IMR-90 (cell line): ENCODE measurements at regions of chr10 and their contacts with region 1.

Region 1: DNA sequence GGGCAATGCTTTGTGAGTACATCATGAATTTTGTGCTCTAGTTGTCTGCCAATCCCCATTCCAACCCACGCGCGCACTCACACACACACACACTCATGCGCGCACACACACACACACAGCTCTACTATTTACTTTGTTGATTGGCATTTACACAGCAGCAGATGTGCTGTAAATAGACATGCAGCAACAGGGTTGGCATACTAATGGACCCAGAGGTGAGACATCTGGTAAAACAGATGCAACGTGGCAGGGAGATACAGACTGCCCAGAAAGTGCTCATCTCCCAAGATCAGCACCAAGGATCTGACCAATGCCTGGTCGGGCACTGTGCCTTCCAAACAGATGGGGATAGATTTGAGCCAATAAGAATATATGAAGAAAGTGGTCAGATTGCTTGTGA is 873.0 kb downstream of the SORCS3 start:
- DNase-seq: no peak
- ATAC-seq: no peak
- H3K4me3 ChIP-seq: no peak overlapping the region
- H3K27ac ChIP-seq: no peak overlapping the region
- H3K4me1 ChIP-seq: no peaks in the 10 kb centered on the region
- H3K27me3 ChIP-seq: no peaks in the 10 kb centered on the region
- CTCF ChIP-seq: no peak
- POLR2A ChIP-seq: no peak
- RAD21 ChIP-seq: no peak

Region 2: GRCh38 chr10:105502058-105502457 is 12.0 kb before region 1 on chr10:
- CTCF ChIA-PET with region 1: no interaction called
- POLR2A ChIA-PET with region 1: no interaction called
- dilution Hi-C with region 1: no loop called
- in situ Hi-C with region 1: no loop called
- intact Hi-C with region 1: loop called (anchors 1 kb)
- DNase-seq: no peak
- ATAC-seq: no peak
- H3K4me3 ChIP-seq: no peak overlapping the region
- H3K27ac ChIP-seq: no peak overlapping the region
- H3K4me1 ChIP-seq: no peaks in the 10 kb centered on the region
- H3K27me3 ChIP-seq: no peaks in the 10 kb centered on the region
- CTCF ChIP-seq: no peak
- POLR2A ChIP-seq: no peak
- RAD21 ChIP-seq: no peak